HepG2 (cell line): ENCODE measurements at regions of chr6 and their contacts with region 1.

Region 1: GRCh38 chr6:30626484-30627366 is at the start of gene ATAT1:
- DNase-seq: peak; percentile 88
- ATAC-seq: peak; percentile 98
- H3K4me3 ChIP-seq: peak within 1 kb of the TSS; percentile 69 to 92 (median 72)
- H3K27ac ChIP-seq: peak within 1 kb of the TSS; percentile 76
- H3K4me1 ChIP-seq: peaks cover 17% of the 10 kb centered on the region
- H3K27me3 ChIP-seq: no peaks in the 10 kb centered on the region; a peak in 1 of 5 replicates
- CTCF ChIP-seq: peak; percentile 87
- EP300 ChIP-seq: peak in 1 of 2 experiments; percentile 36; a peak in 2 of 4 replicates
- POLR2A ChIP-seq: peak; percentile 88 to 97
- RAD21 ChIP-seq: peak; percentile 74
- total RNA-seq, gene ATAT1: 5.4 and 9.2 TPM in 2 replicates

Region 2: GRCh38 chr6:30646458-30647241 is 19.9 kb after region 1 on chr6 and contains the start of gene C6orf136:
- CTCF ChIA-PET with region 1: no interaction called
- POLR2A ChIA-PET with region 1: interaction called, 12 read pairs
- in situ Hi-C with region 1: no loop called
- intact Hi-C with region 1: no loop called
- DNase-seq: peak; percentile 91
- ATAC-seq: peak; percentile 73
- H3K4me3 ChIP-seq: peak within 1 kb of the TSS; percentile 67 to 98 (median 94)
- H3K27ac ChIP-seq: peak within 1 kb of the TSS; percentile 88
- H3K4me1 ChIP-seq: peaks cover 38% of the 10 kb centered on the region
- H3K27me3 ChIP-seq: no peaks in the 10 kb centered on the region; a peak in 1 of 5 replicates
- CTCF ChIP-seq: 0 out of 2 replicates have a peak, but pooled peaks have one; percentile 10
- EP300 ChIP-seq: no peak
- POLR2A ChIP-seq: no peak
- RAD21 ChIP-seq: no peak
- total RNA-seq, gene C6orf136: 9.2 and 12.0 TPM in 2 replicates